Lower leg skin (tissue), 4 donors: ENCODE measurements at regions of chr5 and their contacts with region 1.

Region 1: GRCh38 chr5:71576241-71576640 is 10.9 kb upstream of the MCCC2 start:
- DNase-seq: no peak
- H3K4me3 ChIP-seq: no peak overlapping the region
- CTCF ChIP-seq: no peak
- POLR2A ChIP-seq: no peak

Region 2: DNA sequence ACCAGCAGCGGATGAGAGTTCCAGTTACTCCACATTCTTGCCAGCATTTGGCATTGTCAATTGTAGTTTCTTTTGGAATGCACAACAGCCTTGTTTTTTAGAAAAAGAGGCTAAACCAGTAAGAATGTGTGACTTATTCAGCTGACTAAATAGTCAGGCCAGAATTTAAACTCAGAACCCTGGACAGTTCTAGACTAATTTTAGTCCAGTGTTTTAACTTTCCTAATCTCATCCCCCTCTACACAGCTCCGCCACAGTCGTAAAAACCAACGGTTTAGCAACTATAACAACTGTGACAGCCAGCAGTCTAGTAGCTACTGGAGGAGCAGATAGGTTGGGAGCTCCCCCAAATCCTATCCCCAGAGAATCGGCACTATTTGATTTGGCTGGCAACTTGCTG is 1768.6 kb after region 1 on chr5:
- intact Hi-C with region 1: loop called (anchors 5 kb)
- DNase-seq: no peak
- H3K4me3 ChIP-seq: no peak overlapping the region
- CTCF ChIP-seq: no peak
- POLR2A ChIP-seq: no peak